Mammary epithelial cell (primary cell): ENCODE measurements at regions of chr5 and their contacts with region 1.

Region 1: DNA sequence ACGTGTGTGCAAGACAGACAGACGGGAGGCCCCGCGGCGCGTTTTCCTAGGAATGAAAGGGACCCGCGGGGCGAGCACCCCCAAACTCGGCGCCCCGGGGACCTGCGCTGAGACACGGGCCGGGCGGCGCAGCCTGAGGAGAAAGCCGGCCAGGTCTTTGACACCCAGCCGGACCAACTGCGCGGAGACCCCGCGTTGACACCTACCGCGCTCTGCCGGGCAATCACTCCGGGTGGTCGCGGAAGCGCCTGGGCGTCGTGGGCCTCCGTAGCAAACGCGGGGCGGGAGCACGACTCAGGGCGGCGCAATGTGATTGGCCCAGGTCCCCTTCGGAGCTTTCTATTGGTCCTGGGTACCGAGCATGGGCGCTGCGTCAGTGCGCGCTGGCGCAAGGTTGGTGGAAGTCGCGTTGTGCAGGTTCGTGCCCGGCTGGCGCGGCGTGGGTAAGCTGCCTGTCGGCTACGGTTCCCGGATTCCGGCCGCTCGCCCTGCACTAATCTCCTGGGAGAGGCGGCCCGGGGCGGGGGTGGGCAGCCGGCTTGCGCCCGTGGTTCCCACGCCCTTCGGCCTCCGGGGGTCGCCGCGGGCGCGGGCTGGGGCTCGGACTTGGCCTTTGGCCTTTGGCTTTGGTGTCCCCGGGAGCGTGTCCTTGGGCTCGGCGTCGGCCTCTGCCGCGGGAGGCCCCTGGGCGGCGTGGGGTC is at the starts of genes FASTKD3 and MTRR:
- DNase-seq: peak; percentile 89
- H3K4me3 ChIP-seq: peak within 1 kb of the TSS; percentile 87 to 97 (median 92)
- H3K27ac ChIP-seq: peak within 1 kb of the TSS; percentile 74
- H3K4me1 ChIP-seq: peaks cover 16% of the 10 kb centered on the region
- H3K27me3 ChIP-seq: no peaks in the 10 kb centered on the region
- CTCF ChIP-seq: no peak
- total RNA-seq, gene FASTKD3: 7.5 to 18.0 TPM
- total RNA-seq, gene MTRR: 36.3 to 52.9 TPM

Region 2: GRCh38 chr5:6632917-6633468 is 1235.9 kb before region 1 on chr5 and contains the starts of genes NSUN2 and SRD5A1:
- CTCF ChIA-PET with region 1: no interaction called
- dilution Hi-C with region 1: no loop called
- in situ Hi-C with region 1: no loop called
- intact Hi-C with region 1: loop called (anchors 5 kb)
- DNase-seq: peak; percentile 87
- H3K4me3 ChIP-seq: peak within 1 kb of the TSS; percentile 75 to 91 (median 87)
- H3K27ac ChIP-seq: peak within 1 kb of the TSS; percentile 95
- H3K4me1 ChIP-seq: peaks cover 45% of the 10 kb centered on the region
- H3K27me3 ChIP-seq: no peaks in the 10 kb centered on the region
- CTCF ChIP-seq: no peak
- total RNA-seq, gene NSUN2: 57.2 to 96.1 TPM
- total RNA-seq, gene SRD5A1: 21.8 to 31.8 TPM

Region 3: DNA sequence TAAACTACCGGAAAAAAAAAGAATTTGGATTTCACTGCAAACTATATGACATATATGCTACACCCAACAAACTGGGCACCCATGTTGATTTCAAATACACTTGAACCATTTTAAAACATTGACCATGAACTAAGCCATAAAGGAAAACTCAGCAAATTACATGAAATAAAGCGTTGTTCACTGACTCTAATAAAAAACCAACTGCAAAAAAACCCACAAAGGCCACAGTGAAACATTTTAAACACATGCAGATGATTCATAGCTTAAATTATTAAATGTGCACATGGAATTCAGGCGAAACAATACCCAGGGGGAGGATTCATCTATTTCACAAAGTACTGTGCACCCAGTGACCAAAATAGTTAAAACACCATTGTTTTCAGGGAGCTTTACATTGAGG is 33.3 kb after region 1 on chr5:
- CTCF ChIA-PET with region 1: no interaction called
- dilution Hi-C with region 1: no loop called
- in situ Hi-C with region 1: no loop called
- intact Hi-C with region 1: loop called (anchors 1 kb)
- DNase-seq: no peak
- H3K4me3 ChIP-seq: no peak overlapping the region
- H3K27ac ChIP-seq: no peak overlapping the region
- H3K4me1 ChIP-seq: peaks cover 6% of the 10 kb centered on the region
- H3K27me3 ChIP-seq: no peaks in the 10 kb centered on the region
- CTCF ChIP-seq: no peak